Cardiac septum (tissue), 1 donor: ENCODE measurements at regions of chr9 and their contacts with region 1.

Region 1: DNA sequence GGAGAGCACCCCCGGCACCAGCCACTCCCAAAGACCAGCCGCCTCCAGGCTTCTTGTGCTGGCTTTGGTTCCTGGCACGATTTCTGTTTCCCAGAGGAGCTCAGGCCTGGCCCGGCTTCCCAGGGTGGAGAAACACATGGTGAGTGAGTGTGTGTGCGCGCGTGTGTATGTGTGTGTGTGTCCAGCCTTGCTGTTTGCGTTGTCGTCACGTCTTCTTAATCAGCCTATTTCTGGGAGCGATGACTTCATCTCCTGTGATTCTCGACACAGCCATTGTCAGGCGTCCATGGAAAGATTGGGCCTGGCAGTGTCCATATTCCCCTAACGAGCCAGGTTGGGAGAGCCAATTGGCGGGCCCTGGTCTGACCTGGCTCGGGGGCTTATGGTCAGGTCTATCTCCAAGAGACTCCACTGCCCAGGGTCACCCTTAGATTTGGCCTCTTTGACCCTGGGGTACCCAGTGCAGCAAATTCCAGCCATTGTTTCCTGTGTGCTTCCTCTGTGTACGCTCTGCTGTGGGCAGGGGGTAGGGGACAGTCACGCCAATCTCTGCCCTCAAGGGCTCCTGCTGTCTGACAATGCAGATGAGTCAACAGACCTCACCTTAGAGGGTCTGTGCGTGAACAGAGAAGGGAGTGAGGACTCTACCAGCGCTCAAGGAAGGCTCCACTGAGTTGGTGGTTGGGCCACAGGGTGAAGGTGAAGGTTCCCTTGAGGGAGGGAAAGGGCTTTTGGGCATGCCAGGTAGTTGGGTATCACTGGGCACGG is 73.8 kb downstream of the DAB2IP start:
- DNase-seq: peak; percentile 95

Region 2: DNA sequence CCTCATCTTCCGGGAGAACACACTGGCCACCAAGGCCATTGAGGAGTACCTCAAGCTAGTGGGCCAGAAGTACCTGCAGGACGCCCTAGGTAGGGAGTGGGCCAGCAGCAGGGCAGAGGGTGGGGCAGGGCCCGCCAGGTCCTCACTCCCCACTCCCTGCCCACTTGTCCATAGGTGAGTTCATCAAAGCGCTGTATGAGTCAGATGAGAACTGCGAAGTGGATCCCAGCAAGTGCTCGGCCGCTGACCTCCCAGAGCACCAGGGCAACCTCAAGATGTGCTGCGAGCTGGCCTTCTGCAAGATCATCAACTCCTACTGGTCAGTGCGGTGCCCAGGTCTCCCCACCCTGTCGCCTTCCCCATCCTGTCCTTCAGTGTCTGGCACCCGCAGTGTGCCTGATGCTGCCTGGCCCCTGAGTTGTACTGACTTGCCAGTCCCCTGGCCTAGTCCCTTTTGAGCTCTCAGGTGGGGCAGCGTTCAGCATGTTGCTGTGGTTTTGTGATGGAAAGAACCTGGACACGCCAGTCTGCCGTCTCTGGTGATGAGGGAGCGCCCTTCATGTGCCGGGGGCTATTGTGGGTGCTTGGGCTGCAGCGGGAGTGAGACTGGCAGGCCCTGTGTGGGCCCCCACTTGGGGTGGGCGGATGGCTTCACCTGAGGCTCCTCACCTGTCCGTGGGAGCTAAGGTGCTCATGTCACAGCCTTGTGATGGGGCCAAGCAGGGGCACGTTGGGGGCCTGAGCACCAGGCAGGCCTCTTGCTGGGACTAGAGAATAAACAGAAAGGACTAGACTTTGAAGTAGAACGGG is 38.6 kb after region 1 on chr9:
- intact Hi-C with region 1: loop called (anchors 5 kb)
- DNase-seq: no peak

Region 3: GRCh38 chr9:121985792-121986494 is 260.8 kb after region 1 on chr9:
- intact Hi-C with region 1: loop called (anchors 2 kb)
- DNase-seq: peak; percentile 89